Activated B cell treated with CpG ODN at 0.5 μM for 24 hours (primary cell): ENCODE measurements at regions of chr5 and their contacts with region 1.

Region 1: GRCh38 chr5:169893571-169893970 is 86.7 kb downstream of the INSYN2B start:
- DNase-seq: no peak
- ATAC-seq: no peak
- H3K4me3 Mint-ChIP-seq: no peak overlapping the region
- H3K27ac Mint-ChIP-seq: no peak overlapping the region
- H3K4me1 Mint-ChIP-seq: peaks cover 21% of the 10 kb centered on the region
- H3K27me3 Mint-ChIP-seq: no peaks in the 10 kb centered on the region
- CTCF ChIP-seq: no peak

Region 2: DNA sequence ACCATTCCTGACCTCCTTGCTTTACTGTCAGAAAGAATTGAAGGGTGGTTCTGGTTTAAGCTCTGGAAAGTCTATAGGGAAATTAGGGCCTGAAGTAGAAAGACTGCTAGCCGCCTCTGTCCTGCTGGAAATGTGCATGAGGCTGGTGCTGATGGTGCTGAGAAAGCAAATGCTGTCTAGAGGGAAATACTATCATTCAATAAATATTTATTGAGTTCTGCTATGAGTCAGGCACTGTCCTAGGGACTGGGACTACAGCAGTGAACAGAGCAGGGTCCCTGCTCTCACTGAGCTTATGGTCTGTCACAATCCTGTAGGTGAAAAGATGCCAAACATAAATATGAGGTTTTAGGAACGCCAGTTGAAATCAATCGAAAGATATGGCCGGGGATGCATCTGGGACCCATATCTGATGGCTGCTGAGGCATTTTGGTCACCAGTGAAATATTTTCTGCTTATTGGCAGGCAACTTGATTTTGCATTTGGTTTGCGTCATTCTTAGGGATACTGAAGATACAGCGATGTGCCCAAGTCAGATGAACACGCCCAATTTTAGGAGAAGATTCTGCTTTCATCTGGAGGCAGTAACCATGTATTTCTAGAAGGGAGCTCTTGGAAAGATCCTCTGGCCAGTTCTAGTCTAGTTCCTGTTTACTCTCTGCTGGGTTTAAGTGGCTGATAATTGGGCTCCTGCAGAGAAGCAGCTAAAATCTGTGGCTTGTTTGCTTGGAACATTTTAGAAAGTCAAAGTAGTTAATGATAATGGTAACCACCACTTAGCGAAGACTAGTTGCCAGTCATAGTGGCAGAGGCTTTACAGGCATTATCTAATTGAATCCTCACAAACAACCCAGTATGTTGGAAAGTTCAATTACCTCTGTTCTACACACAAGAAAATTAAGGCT is 13.4 kb after region 1 on chr5:
- CTCF ChIA-PET with region 1: no interaction called
- POLR2A ChIA-PET with region 1: no interaction called
- intact Hi-C with region 1: loop called (anchors 1 kb)
- DNase-seq: no peak
- ATAC-seq: no peak
- H3K4me3 Mint-ChIP-seq: no peak overlapping the region
- H3K27ac Mint-ChIP-seq: no peak overlapping the region
- H3K4me1 Mint-ChIP-seq: peaks cover under 1% of the 10 kb centered on the region
- H3K27me3 Mint-ChIP-seq: no peaks in the 10 kb centered on the region
- CTCF ChIP-seq: no peak